Colonic mucosa (tissue), 4 donors: ENCODE measurements at regions of chr22 and their contacts with region 1.

Region 1: GRCh38 chr22:44975427-44976262 is 34.2 kb downstream of the PHF21B start:
- DNase-seq: peak; percentile 80
- H3K4me3 ChIP-seq: no peak overlapping the region
- H3K27ac ChIP-seq: no peak overlapping the region
- H3K4me1 ChIP-seq: no peaks in the 10 kb centered on the region
- H3K27me3 ChIP-seq: no peaks in the 10 kb centered on the region
- CTCF ChIP-seq: peak; percentile 70

Region 2: DNA sequence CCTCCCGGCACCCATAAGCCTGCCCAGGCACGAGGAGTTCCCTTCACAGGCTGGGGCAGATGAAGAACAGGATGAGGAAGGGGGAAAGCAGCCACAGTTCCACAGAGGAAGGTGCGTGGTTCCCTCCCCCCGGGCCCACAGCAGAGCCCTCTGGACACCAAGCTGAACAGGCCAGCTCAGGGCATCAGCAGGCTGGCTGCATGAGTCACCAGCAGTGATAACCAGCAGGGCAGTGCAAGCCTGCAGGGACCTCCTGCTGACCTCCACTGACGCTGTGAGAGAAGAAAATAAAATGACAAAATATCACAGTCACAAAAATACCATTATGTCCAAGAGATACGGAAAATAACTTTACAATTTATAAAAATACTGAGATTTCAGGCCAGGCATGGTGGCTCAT is 489.1 kb before region 1 on chr22:
- intact Hi-C with region 1: no loop called
- DNase-seq: no peak
- H3K4me3 ChIP-seq: no peak overlapping the region
- H3K27ac ChIP-seq: no peak overlapping the region
- H3K4me1 ChIP-seq: no peaks in the 10 kb centered on the region
- H3K27me3 ChIP-seq: no peaks in the 10 kb centered on the region
- CTCF ChIP-seq: no peak

Region 3: GRCh38 chr22:44956840-44957767 is 18.5 kb before region 1 on chr22:
- intact Hi-C with region 1: no loop called
- DNase-seq: no peak
- H3K4me3 ChIP-seq: no peak overlapping the region
- H3K27ac ChIP-seq: no peak overlapping the region
- H3K4me1 ChIP-seq: no peaks in the 10 kb centered on the region
- H3K27me3 ChIP-seq: no peaks in the 10 kb centered on the region
- CTCF ChIP-seq: no peak

Region 4: DNA sequence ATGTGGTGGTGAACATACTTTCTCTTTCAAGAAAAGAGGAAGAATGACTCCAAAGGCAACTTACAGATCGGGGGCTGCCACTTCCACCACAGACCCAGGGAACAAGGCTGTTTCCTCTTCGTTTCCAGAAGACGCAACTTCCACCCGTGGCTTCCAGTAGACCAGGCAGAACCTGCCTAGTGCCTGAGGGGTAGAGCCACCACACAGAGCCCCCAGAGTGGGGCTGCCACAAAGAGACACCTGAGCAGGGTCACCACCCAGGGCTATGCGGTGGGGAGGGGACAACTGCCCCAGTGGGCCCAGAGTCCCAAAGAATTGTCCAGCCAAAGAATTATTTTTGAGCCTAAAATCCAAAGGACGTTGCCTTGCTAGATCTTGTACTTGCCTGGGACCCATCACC is 50.9 kb after region 1 on chr22:
- intact Hi-C with region 1: no loop called
- DNase-seq: no peak
- H3K4me3 ChIP-seq: no peak overlapping the region
- H3K27ac ChIP-seq: no peak overlapping the region
- H3K4me1 ChIP-seq: no peaks in the 10 kb centered on the region
- H3K27me3 ChIP-seq: no peaks in the 10 kb centered on the region
- CTCF ChIP-seq: no peak

Region 5: GRCh38 chr22:45072322-45072903 is 96.8 kb after region 1 on chr22:
- intact Hi-C with region 1: no loop called
- DNase-seq: no peak
- H3K4me3 ChIP-seq: no peak overlapping the region
- H3K27ac ChIP-seq: no peak overlapping the region
- H3K4me1 ChIP-seq: no peaks in the 10 kb centered on the region
- H3K27me3 ChIP-seq: peaks cover 4% of the 10 kb centered on the region
- CTCF ChIP-seq: no peak

Region 6: GRCh38 chr22:45096256-45096907 is 120.7 kb after region 1 on chr22:
- intact Hi-C with region 1: loop called (anchors 2 kb)
- DNase-seq: peak; percentile 65
- H3K4me3 ChIP-seq: no peak overlapping the region
- H3K27ac ChIP-seq: no peak overlapping the region
- H3K4me1 ChIP-seq: no peaks in the 10 kb centered on the region
- H3K27me3 ChIP-seq: no peaks in the 10 kb centered on the region
- CTCF ChIP-seq: peak; percentile 70